ENCODE measurements at regions of chr3 and their contacts with region 1.

Region 1: GRCh38 chr3:190414297-190414696 is 26.3 kb downstream of the CLDN16 start:
- DNase-seq: no peak
- H3K4me3 ChIP-seq: no peak overlapping the region
- H3K27ac ChIP-seq: no peak overlapping the region
- H3K4me1 ChIP-seq: no peaks in the 10 kb centered on the region
- H3K27me3 ChIP-seq: no peaks in the 10 kb centered on the region
- CTCF ChIP-seq: no peak
- EP300 ChIP-seq: no peak
- POLR2A ChIP-seq: no peak
- RAD21 ChIP-seq: no peak

Region 2: GRCh38 chr3:190396001-190396400 is 18.3 kb before region 1 on chr3:
- CTCF ChIA-PET with region 1: no interaction called
- POLR2A ChIA-PET with region 1: no interaction called
- DNase-seq: no peak
- H3K4me3 ChIP-seq: no peak overlapping the region
- H3K27ac ChIP-seq: no peak overlapping the region
- H3K4me1 ChIP-seq: no peaks in the 10 kb centered on the region
- H3K27me3 ChIP-seq: no peaks in the 10 kb centered on the region
- CTCF ChIP-seq: no peak
- EP300 ChIP-seq: no peak
- POLR2A ChIP-seq: no peak
- RAD21 ChIP-seq: no peak

Region 3: GRCh38 chr3:190424478-190425439 is 10.5 kb after region 1 on chr3:
- CTCF ChIA-PET with region 1: interaction called, 22 read pairs
- POLR2A ChIA-PET with region 1: no interaction called
- DNase-seq: peak; percentile 43 to 79
- H3K4me3 ChIP-seq: no peak overlapping the region
- H3K27ac ChIP-seq: no peak overlapping the region
- H3K4me1 ChIP-seq: no peaks in the 10 kb centered on the region
- H3K27me3 ChIP-seq: no peaks in the 10 kb centered on the region
- CTCF ChIP-seq: peak in 2 of 3 experiments; percentile 54 to 59; a peak in 2 of 4 replicates
- EP300 ChIP-seq: peak in 1 of 2 experiments; percentile 23; a peak in 1 of 3 replicates
- POLR2A ChIP-seq: no peak
- RAD21 ChIP-seq: peak; percentile 66 to 72